ENCODE measurements at regions of chr1 and their contacts with region 1.

Region 1: DNA sequence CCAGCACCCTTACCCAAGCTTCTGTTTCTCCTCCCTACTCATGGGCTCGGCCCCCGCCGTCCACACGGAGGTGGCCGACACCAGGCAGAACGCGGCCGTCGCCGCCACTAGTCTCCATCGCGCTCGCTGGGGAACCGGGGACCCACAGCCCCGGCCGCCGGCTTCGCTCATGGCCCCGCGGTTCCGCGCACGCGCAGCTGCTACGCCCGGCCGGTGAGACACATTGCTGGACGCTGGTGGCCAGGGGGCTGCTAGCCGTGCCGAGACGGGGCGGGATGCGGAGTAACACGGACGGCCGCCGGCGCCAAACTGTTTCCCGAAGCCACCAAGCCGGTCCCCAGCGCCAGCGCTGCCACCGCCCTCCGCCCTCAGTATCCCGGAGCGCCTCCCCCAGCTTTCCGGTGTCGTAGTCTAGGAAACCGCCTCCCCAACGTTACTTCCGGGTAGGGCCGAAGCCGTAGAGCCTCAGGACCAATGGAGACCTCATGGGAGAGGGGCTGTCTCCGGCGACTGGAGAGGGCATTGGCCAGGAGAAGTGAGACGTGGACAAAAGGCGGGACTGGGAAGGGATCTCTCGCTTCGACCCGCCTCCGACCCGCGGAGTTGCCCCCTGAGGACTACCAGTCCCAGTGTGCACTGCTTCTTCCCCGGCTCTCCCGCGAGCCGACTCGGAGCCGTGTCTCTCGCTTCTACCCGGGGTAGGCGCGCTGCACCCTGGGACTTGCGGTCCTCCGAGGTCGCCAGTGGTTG is at the start of gene EDEM3:
- DNase-seq: peak; percentile 98 to 99
- H3K4me3 ChIP-seq: peak within 1 kb of the TSS; percentile 76 to 90
- H3K27ac ChIP-seq: peak within 1 kb of the TSS; percentile 93 to 96
- H3K4me1 ChIP-seq: peaks cover 2 to 11% of the 10 kb centered on the region in 2 donors
- H3K27me3 ChIP-seq: no peaks in the 10 kb centered on the region
- CTCF ChIP-seq: no peak
- total RNA-seq, gene EDEM3: 23.1 TPM

Region 2: GRCh38 chr1:183635606-183636333 is 1118.9 kb before region 1 on chr1 and contains the start of gene ARPC5:
- intact Hi-C with region 1: loop called (anchors 10 kb)
- DNase-seq: peak; percentile 85 to 97
- H3K4me3 ChIP-seq: peak within 1 kb of the TSS; percentile 93 to 97
- H3K27ac ChIP-seq: peak within 1 kb of the TSS; percentile 95 to 99
- H3K4me1 ChIP-seq: peaks cover 0 to 6% of the 10 kb centered on the region in 2 donors
- H3K27me3 ChIP-seq: no peaks in the 10 kb centered on the region
- CTCF ChIP-seq: no peak
- total RNA-seq, gene ARPC5: 48.3 TPM

Region 3: GRCh38 chr1:184036517-184036949 is 718.1 kb before region 1 on chr1:
- intact Hi-C with region 1: no loop called
- DNase-seq: no peak
- H3K4me3 ChIP-seq: peak overlapping the region; percentile 76 to 82
- H3K27ac ChIP-seq: no peak overlapping the region
- H3K4me1 ChIP-seq: peaks cover 0 to 9% of the 10 kb centered on the region in 2 donors
- H3K27me3 ChIP-seq: peaks cover 3% of the 10 kb centered on the region
- CTCF ChIP-seq: no peak

Region 4: GRCh38 chr1:184792450-184792969 is 37.9 kb after region 1 on chr1:
- intact Hi-C with region 1: loop called (anchors 1 kb)
- DNase-seq: peak; percentile 83 to 96
- H3K4me3 ChIP-seq: no peak overlapping the region
- H3K27ac ChIP-seq: peak overlapping the region; percentile 71 to 79
- H3K4me1 ChIP-seq: peaks cover 6 to 16% of the 10 kb centered on the region in 2 donors
- H3K27me3 ChIP-seq: no peaks in the 10 kb centered on the region
- CTCF ChIP-seq: no peak

Region 5: GRCh38 chr1:184982002-184982954 is 227.6 kb after region 1 on chr1:
- intact Hi-C with region 1: loop called (anchors 2 kb)
- DNase-seq: peak in 1 of 2 donors; percentile 89
- H3K4me3 ChIP-seq: no peak overlapping the region
- H3K27ac ChIP-seq: no peak overlapping the region
- H3K4me1 ChIP-seq: no peaks in the 10 kb centered on the region
- H3K27me3 ChIP-seq: no peaks in the 10 kb centered on the region
- CTCF ChIP-seq: peak; percentile 78 to 94 (median 92)

Region 6: DNA sequence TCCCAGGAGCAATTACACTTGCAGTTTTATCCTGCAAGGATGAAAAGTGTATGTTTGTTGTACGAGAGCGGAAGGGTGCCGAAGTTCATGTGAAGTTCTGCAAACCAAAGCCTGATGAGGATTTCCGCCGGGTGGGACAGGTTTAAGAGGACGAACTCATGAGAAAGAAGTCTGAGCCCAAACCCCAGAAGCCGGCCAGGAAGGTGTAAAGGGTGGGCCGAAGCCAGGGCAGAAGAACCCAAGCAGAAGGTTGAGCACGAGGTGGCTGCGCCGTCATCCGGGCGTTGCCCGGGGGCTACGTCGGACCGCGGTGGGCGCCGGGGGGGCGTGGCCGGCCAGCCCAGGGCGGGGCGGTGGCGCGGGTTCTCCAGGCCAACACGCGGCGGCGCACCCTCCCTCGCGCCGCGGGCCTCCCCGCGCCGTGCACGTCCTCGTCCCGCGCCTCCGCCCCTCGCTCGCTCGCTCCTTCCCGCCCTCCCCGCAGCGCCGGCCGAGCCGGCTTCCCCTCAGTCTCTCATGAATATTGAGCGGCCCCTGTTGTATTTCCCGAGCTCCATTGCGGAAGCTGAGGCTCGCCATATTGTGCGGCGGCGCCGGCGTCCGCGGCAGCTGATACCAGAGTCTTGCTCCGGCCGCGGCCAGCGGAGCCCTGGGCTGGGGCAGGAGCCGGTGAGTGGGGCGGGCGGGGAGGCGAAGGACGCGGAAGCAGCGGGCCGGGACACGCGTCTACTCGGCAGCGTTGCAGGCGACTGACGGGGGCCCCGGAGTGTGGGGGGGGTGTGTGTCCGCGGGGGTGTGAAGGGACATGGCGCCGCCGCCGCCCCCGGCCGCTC is 290.5 kb after region 1 on chr1 and contains the start of gene RNF2:
- intact Hi-C with region 1: loop called (anchors 2 kb)
- DNase-seq: peak; percentile 41 to 88
- H3K4me3 ChIP-seq: peak within 1 kb of the TSS; percentile 73 to 87
- H3K27ac ChIP-seq: peak within 1 kb of the TSS; percentile 82 to 88
- H3K4me1 ChIP-seq: peaks cover 0 to 18% of the 10 kb centered on the region in 2 donors
- H3K27me3 ChIP-seq: no peaks in the 10 kb centered on the region
- CTCF ChIP-seq: no peak
- total RNA-seq, gene RNF2: 4.0 TPM

Region 7: GRCh38 chr1:185317034-185317885 is 562.6 kb after region 1 on chr1 and contains the start of gene IVNS1ABP:
- intact Hi-C with region 1: loop called (anchors 10 kb)
- DNase-seq: peak; percentile 86 to 97
- H3K4me3 ChIP-seq: peak within 1 kb of the TSS; percentile 87 to 98
- H3K27ac ChIP-seq: peak within 1 kb of the TSS; percentile 96 to 98
- H3K4me1 ChIP-seq: peaks cover 0 to 17% of the 10 kb centered on the region in 2 donors
- H3K27me3 ChIP-seq: no peaks in the 10 kb centered on the region
- CTCF ChIP-seq: peak in 2 of 3 experiments; percentile 12 to 35
- total RNA-seq, gene IVNS1ABP: 61.0 TPM